Vagina (tissue), 2 donors: ENCODE measurements at regions of chr12 and their contacts with region 1.

Region 1: GRCh38 chr12:42237052-42237852 is 796 bp downstream of the YAF2 start:
- DNase-seq: no peak
- H3K4me3 ChIP-seq: peak overlapping the region; percentile 77 to 92
- H3K27ac ChIP-seq: peak overlapping the region; percentile 92
- H3K4me1 ChIP-seq: peaks cover 50% of the 10 kb centered on the region
- H3K27me3 ChIP-seq: no peaks in the 10 kb centered on the region
- CTCF ChIP-seq: no peak
- POLR2A ChIP-seq: no peak

Region 2: GRCh38 chr12:41612892-41613557 is 624.2 kb before region 1 on chr12:
- intact Hi-C with region 1: no loop called
- DNase-seq: no peak
- H3K4me3 ChIP-seq: no peak overlapping the region
- H3K27ac ChIP-seq: no peak overlapping the region
- H3K4me1 ChIP-seq: no peaks in the 10 kb centered on the region
- H3K27me3 ChIP-seq: no peaks in the 10 kb centered on the region
- CTCF ChIP-seq: no peak
- POLR2A ChIP-seq: no peak

Region 3: DNA sequence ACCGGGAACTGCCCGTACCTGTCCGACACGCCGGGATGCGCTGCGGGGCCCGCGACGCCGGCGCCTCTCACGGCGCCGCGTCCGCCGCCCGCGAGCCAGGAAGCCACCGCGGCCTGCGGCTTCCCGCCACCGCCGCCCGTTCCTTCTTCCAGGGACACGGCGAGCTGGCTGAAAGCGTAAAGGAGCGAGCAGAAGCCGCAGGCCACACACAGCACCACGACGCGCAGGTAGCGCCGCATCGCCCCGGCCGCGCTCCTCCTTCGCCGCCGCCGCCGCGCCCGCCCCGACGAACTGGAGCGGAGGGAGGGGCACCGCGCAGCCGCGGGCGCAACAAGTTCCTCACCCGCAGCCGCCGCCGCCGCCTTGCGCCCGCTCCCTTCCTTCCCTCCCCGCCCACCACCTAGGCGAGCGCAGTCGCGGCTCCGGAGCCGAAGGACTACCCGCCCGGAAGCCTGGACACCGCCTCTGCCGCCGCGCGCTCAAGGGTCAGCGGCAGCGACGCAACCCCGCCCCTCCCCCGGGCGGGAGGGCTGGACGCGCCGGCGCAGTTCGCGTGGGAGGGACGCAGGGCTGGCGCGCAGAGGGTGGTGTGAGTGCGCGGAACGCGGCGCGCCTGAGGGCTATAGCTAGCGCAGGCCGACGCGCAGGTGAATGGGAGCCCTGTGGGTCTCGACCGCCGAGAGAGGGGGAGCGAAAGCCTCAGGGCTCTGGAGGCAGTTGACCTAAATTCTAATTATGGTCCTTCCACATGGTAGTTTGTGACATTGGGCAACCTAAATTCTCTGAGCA is 92.7 kb before region 1 on chr12 and contains the start of gene GXYLT1:
- intact Hi-C with region 1: loop called (anchors 10 kb)
- DNase-seq: no peak
- H3K4me3 ChIP-seq: peak within 1 kb of the TSS; percentile 55 to 94
- H3K27ac ChIP-seq: peak within 1 kb of the TSS; percentile 75
- H3K4me1 ChIP-seq: peaks cover 23% of the 10 kb centered on the region
- H3K27me3 ChIP-seq: no peaks in the 10 kb centered on the region
- CTCF ChIP-seq: no peak
- POLR2A ChIP-seq: peak in 1 of 2 donors; percentile 60
- total RNA-seq, gene GXYLT1: 11.8 TPM

Region 4: DNA sequence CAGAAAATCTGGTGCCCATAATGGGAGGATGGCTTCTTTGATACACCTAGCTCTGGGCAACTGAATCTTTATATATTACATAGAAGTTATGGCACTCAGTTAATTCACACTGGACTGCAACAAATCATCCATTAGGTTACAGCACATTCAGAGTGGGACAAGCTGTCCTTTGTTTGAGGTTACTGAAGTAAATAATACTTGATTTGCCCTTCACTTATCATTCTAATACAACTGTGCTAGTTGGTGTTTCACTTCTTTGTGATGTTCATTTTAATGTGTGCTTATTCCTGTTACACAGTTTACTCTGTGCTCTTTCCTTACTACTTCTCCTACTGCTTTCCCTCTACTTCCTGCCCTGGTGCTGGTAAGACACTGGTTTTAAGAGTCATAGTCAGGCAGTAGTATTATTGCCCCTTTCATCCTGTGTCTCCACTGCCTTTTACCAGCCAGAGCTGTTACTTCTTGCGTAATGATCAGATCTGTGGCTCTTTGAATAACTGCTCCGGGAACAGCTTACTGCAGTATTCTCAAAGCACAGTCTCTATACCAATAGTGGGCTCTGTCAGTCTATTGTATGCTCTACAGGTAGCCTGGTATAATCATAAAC is 56.2 kb before region 1 on chr12:
- intact Hi-C with region 1: no loop called
- DNase-seq: no peak
- H3K4me3 ChIP-seq: no peak overlapping the region
- H3K27ac ChIP-seq: no peak overlapping the region
- H3K4me1 ChIP-seq: no peaks in the 10 kb centered on the region
- H3K27me3 ChIP-seq: no peaks in the 10 kb centered on the region
- CTCF ChIP-seq: no peak
- POLR2A ChIP-seq: no peak

Region 5: GRCh38 chr12:42284157-42284556 is 46.9 kb after region 1 on chr12:
- intact Hi-C with region 1: no loop called
- DNase-seq: no peak
- H3K4me3 ChIP-seq: no peak overlapping the region
- H3K27ac ChIP-seq: no peak overlapping the region
- H3K4me1 ChIP-seq: peaks cover 3% of the 10 kb centered on the region
- H3K27me3 ChIP-seq: no peaks in the 10 kb centered on the region
- CTCF ChIP-seq: no peak
- POLR2A ChIP-seq: no peak

Region 6: GRCh38 chr12:42325653-42326474 is 88.6 kb after region 1 on chr12 and contains the starts of genes PPHLN1 and ZCRB1:
- intact Hi-C with region 1: loop called (anchors 10 kb)
- DNase-seq: peak in 1 of 2 donors; percentile 89
- H3K4me3 ChIP-seq: peak within 1 kb of the TSS; percentile 68 to 72
- H3K27ac ChIP-seq: peak within 1 kb of the TSS; percentile 85
- H3K4me1 ChIP-seq: peaks cover 28% of the 10 kb centered on the region
- H3K27me3 ChIP-seq: no peaks in the 10 kb centered on the region
- CTCF ChIP-seq: no peak
- POLR2A ChIP-seq: peak in 1 of 2 donors; percentile 48
- total RNA-seq, gene PPHLN1: 47.9 TPM
- total RNA-seq, gene ZCRB1: 36.3 TPM